ENCODE measurements at regions of chr5 and their contacts with region 1.

Region 1: DNA sequence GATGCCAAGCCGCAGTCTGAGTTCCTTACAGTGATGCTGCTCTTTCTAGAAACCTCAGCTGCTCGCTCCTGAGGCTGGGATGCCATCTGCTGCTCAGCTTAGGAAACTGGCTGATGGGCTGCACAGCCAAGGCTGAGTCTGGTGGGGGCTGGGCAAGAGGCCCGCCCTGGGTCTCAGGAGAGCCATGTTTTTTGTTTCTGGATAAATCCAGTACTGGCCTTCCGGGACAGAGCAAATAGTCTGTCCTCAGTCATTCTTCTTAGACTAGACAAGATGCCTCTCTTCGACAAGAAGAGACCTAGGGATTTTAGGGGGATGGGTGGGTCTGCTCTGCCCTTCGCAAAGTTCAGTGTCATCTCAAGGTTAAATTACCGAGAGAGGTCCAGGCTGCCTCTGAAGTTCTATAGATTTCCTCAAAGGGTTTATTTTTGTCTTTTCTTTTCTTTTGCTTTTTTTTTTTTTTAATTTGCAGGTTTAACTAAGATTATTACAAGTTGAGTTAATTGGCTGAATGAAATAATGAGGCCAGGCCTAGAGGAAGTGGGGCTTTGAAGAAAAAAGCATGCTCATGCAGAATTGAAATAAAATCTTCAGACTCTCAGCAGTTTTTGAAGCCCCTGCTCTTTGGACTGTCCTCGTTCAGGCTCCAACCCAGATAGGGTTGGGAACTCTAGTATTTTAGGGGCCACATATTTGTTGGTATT is 30.6 kb upstream of the MATR3 start:
- DNase-seq: peak in 1 of 2 donors; percentile 93
- H3K4me3 ChIP-seq: no peak overlapping the region
- H3K27ac ChIP-seq: no peak overlapping the region
- H3K4me1 ChIP-seq: peaks cover 9% of the 10 kb centered on the region
- H3K27me3 ChIP-seq: no peaks in the 10 kb centered on the region
- CTCF ChIP-seq: peak; percentile 40 to 85 (median 70)
- POLR2A ChIP-seq: no peak

Region 2: DNA sequence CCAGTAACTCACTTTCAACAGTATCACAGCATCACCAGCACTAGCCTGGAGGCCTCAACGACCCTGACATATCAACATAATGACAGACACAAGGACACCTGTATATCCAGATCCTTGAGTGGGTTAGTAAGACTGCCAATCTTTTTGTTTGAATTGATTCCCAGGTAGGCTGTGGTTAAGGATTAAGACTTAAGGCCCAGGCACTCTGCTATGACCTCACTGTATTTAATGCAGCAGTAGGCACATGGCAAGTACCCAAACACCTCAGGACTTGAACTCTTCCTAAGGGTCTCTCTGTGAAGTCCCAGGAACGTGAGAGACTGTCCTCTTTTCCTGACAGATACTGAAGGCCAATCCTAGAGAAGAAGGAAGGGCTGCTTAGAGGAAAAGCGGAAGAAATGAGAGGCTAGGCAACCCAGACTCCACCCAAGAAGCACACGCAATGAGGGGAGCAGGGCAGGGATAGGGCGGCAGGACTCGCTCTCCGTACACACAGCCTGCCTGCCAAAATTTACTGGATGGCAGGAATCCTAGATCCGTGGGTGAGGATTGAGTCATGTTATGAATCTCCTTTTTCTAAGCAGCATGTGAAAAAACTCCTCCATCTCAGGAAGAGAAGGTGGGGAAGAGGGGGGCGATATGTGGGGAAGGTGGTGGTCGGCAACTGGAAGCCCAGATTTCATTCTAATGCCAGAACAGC is 158.2 kb before region 1 on chr5:
- intact Hi-C with region 1: loop called (anchors 10 kb)
- DNase-seq: peak in 1 of 2 donors; percentile 88
- H3K4me3 ChIP-seq: no peak overlapping the region
- H3K27ac ChIP-seq: peak overlapping the region; percentile 74
- H3K4me1 ChIP-seq: peaks cover 34% of the 10 kb centered on the region
- H3K27me3 ChIP-seq: no peaks in the 10 kb centered on the region
- CTCF ChIP-seq: no peak
- POLR2A ChIP-seq: no peak